ENCODE measurements at regions of chr3 and their contacts with region 1.

Region 1: GRCh38 chr3:179882292-179882691 is 154.4 kb downstream of the PEX5L start:
- DNase-seq: peak; percentile 61
- ATAC-seq: peak; percentile 94
- H3K4me3 ChIP-seq: no peak overlapping the region
- H3K27ac ChIP-seq: peak overlapping the region; percentile 58; the same call in 1 of the 2 replicates
- H3K4me1 ChIP-seq: peaks cover 21% of the 10 kb centered on the region
- H3K27me3 ChIP-seq: no peaks in the 10 kb centered on the region
- CTCF ChIP-seq: no peak
- EP300 ChIP-seq: no peak
- POLR2A ChIP-seq: no peak
- RAD21 ChIP-seq: no peak

Region 2: DNA sequence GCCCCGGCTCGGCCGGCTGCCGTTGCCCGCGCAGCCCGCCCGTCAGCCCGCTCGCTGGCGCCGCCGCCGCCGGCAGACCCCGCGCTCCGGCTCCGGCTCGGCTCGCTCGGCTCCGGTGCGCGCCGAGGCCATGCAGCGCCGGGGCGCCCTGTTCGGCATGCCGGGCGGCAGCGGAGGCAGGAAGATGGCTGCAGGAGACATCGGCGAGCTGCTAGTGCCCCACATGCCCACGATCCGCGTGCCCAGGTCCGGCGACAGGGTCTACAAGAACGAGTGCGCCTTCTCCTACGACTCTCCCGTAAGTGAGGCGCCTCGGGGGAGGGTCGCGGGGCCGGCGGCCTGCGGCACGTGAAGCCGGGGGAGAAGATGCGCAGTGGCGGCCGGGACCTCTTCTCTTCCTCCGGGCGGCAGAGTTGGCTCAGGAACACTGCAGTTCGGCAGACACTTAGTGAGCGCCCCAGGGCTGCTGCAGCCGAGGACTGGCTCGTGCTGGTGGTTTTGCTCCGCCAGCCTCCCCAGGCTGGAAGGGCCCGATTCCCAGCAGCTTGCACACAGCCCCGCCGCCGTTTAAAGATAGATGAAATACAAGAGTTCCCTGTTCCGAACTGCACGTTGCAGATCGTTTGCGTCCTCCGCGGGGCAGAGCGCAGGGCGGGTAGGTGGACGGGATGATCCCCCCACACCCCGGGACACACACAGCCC is 229.0 kb before region 1 on chr3:
- CTCF ChIA-PET with region 1: interaction called, 3 read pairs
- POLR2A ChIA-PET with region 1: no interaction called
- RAD21 ChIA-PET with region 1: interaction called, 4 read pairs
- SMC1A ChIA-PET with region 1: interaction called, 4 read pairs
- in situ Hi-C with region 1: no loop called
- intact Hi-C with region 1: loop called (anchors 5 kb)
- DNase-seq: no peak
- ATAC-seq: peak; percentile 69
- H3K4me3 ChIP-seq: peak overlapping the region; percentile 99
- H3K27ac ChIP-seq: peak overlapping the region; percentile 73
- H3K4me1 ChIP-seq: no peaks in the 10 kb centered on the region
- H3K27me3 ChIP-seq: no peaks in the 10 kb centered on the region
- CTCF ChIP-seq: peak in 2 of 3 experiments; percentile 8 to 36; a peak in 3 of 6 replicates
- EP300 ChIP-seq: no peak
- POLR2A ChIP-seq: peak; percentile 79
- RAD21 ChIP-seq: no peak; the same call in 1 of the 2 replicates

Region 3: DNA sequence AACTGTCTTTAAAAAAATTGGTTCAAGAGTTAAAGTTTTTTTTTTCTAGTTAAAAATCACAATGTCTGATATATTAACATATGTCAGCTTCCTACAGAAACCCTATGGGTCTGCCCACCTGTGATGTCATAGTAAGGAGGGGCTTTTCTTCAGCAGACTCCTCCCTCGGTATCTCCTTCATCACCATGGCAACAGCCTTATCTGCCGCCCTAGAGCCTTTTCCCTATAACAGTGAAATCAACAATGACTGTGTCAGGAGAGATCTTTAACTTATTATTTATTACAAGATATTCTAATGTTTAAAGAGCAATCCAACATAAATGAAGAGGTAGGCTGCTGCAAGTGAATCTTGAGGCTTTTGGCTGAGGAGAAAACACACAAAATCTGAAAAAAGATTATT is 15.7 kb after region 1 on chr3:
- CTCF ChIA-PET with region 1: interaction called, 16 read pairs
- POLR2A ChIA-PET with region 1: interaction called, 8 read pairs
- RAD21 ChIA-PET with region 1: interaction called, 15 read pairs
- SMC1A ChIA-PET with region 1: interaction called, 35 read pairs
- in situ Hi-C with region 1: no loop called
- intact Hi-C with region 1: no loop called
- DNase-seq: no peak
- ATAC-seq: peak; percentile 97
- H3K4me3 ChIP-seq: no peak overlapping the region
- H3K27ac ChIP-seq: no peak overlapping the region
- H3K4me1 ChIP-seq: no peaks in the 10 kb centered on the region
- H3K27me3 ChIP-seq: no peaks in the 10 kb centered on the region
- CTCF ChIP-seq: no peak
- EP300 ChIP-seq: no peak
- POLR2A ChIP-seq: no peak
- RAD21 ChIP-seq: no peak

Region 4: DNA sequence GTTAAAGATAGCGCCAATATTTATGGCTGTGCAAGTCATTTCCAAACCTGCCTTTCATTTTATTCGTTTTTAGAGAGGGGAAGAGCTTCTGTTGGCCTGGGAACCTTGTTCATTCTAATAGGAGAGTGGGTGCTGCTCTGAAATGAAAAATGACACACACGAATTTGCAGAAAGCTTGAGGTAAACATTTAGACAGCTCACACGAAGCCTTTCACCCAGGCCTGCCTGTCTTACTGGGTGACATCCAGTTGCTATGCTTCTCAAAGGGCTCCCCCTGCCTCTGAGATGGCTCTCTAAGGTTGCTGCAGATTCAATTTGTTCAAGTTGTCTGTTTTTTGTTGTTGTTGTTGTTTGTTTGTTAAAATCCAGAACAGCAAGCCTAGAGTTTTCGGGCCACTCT is 136.3 kb after region 1 on chr3:
- CTCF ChIA-PET with region 1: interaction called, 26 read pairs
- POLR2A ChIA-PET with region 1: no interaction called
- RAD21 ChIA-PET with region 1: interaction called, 14 read pairs
- SMC1A ChIA-PET with region 1: interaction called, 24 read pairs
- in situ Hi-C with region 1: no loop called
- intact Hi-C with region 1: no loop called
- DNase-seq: no peak
- ATAC-seq: peak; percentile 85
- H3K4me3 ChIP-seq: no peak overlapping the region
- H3K27ac ChIP-seq: no peak overlapping the region
- H3K4me1 ChIP-seq: no peaks in the 10 kb centered on the region
- H3K27me3 ChIP-seq: no peaks in the 10 kb centered on the region
- CTCF ChIP-seq: peak; percentile 8 to 50 (median 35); a peak in 3 of 6 replicates
- EP300 ChIP-seq: no peak
- POLR2A ChIP-seq: no peak
- RAD21 ChIP-seq: peak; percentile 65

Region 5: DNA sequence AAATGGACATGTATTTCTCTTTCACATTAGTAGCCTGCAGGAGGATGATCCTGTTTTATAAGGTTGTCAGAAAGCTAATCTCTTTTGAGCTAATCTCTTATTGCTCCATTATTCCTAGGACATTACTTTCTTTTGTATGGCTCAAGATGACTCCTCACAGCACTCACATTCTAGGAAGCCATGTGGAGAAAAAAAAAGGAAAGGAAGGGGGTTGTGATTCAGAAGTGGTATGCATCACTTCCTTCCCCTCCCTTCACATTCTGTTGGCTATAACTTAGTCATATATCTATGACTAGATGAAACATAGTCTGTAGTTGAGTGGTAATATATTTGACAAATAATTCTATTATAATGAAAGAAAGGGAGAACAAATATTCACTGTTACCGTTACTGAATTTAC is 550.9 kb after region 1 on chr3:
- CTCF ChIA-PET with region 1: no interaction called
- POLR2A ChIA-PET with region 1: no interaction called
- RAD21 ChIA-PET with region 1: no interaction called
- SMC1A ChIA-PET with region 1: no interaction called
- in situ Hi-C with region 1: no loop called
- intact Hi-C with region 1: no loop called
- DNase-seq: no peak
- ATAC-seq: no peak
- H3K4me3 ChIP-seq: no peak overlapping the region
- H3K27ac ChIP-seq: no peak overlapping the region
- H3K4me1 ChIP-seq: no peaks in the 10 kb centered on the region
- H3K27me3 ChIP-seq: no peaks in the 10 kb centered on the region
- CTCF ChIP-seq: no peak
- EP300 ChIP-seq: no peak
- POLR2A ChIP-seq: no peak
- RAD21 ChIP-seq: no peak

Region 6: GRCh38 chr3:180601688-180602666 is 719.7 kb after region 1 on chr3 and contains the start of gene TTC14:
- CTCF ChIA-PET with region 1: interaction called, 23 read pairs
- POLR2A ChIA-PET with region 1: no interaction called
- RAD21 ChIA-PET with region 1: interaction called, 10 read pairs
- SMC1A ChIA-PET with region 1: interaction called, 5 read pairs
- in situ Hi-C with region 1: no loop called
- intact Hi-C with region 1: no loop called
- DNase-seq: peak; percentile 81
- ATAC-seq: peak; percentile 95
- H3K4me3 ChIP-seq: peak within 1 kb of the TSS; percentile 90
- H3K27ac ChIP-seq: peak within 1 kb of the TSS; percentile 67
- H3K4me1 ChIP-seq: no peaks in the 10 kb centered on the region
- H3K27me3 ChIP-seq: no peaks in the 10 kb centered on the region
- CTCF ChIP-seq: peak in 1 of 3 experiments; percentile 45; a peak in 2 of 6 replicates
- EP300 ChIP-seq: no peak
- POLR2A ChIP-seq: peak; percentile 93
- RAD21 ChIP-seq: peak; percentile 34
- polyA plus RNA-seq, gene TTC14: 14.0 to 22.4 TPM